ENCODE measurements at regions of chr6 and their contacts with region 1.

Region 1: GRCh38 chr6:85537055-85537494 is 56.6 kb downstream of the SNX14 start:
- DNase-seq: no peak
- H3K4me3 ChIP-seq: no peak overlapping the region
- CTCF ChIP-seq: peak; percentile 5

Region 2: GRCh38 chr6:85516168-85516567 is 20.9 kb before region 1 on chr6:
- CTCF ChIA-PET with region 1: interaction called, 11 read pairs
- POLR2A ChIA-PET with region 1: no interaction called
- DNase-seq: no peak
- H3K4me3 ChIP-seq: no peak overlapping the region
- CTCF ChIP-seq: no peak

Region 3: GRCh38 chr6:86031713-86032112 is 494.6 kb after region 1 on chr6:
- CTCF ChIA-PET with region 1: no interaction called
- POLR2A ChIA-PET with region 1: no interaction called
- DNase-seq: no peak
- H3K4me3 ChIP-seq: no peak overlapping the region
- CTCF ChIP-seq: no peak